HEK293 (cell line): ENCODE measurements at regions of chr6 and their contacts with region 1.

Region 1: GRCh38 chr6:148578245-148578732 is 168.5 kb upstream of the UST start:
- H3K4me3 ChIP-seq: no peak overlapping the region
- H3K27ac ChIP-seq: no peak overlapping the region
- H3K4me1 ChIP-seq: no peaks in the 10 kb centered on the region
- CTCF ChIP-seq: peak; percentile 99

Region 2: DNA sequence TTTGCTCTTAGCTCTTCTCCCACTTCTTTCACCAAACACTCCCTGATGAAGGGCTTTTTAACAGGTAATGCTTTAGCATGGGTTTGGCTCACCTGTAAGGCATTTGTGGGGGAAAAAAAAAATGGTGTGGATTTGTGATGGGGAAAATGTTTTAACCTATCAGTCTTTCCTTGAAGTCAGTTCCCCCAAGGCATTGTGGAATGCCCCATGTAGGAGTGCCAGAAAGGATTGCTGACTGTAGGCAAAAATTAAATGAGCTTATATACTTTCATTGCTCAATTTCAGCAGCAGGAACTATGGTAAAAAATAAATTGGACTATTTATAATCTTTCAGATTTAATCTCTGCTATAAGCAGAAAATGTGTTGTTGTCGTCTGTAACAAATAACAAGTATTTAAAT is 246.2 kb before region 1 on chr6:
- CTCF ChIA-PET with region 1: no interaction called
- POLR2A ChIA-PET with region 1: no interaction called
- H3K4me3 ChIP-seq: no peak overlapping the region
- H3K27ac ChIP-seq: no peak overlapping the region
- H3K4me1 ChIP-seq: no peaks in the 10 kb centered on the region
- CTCF ChIP-seq: no peak

Region 3: DNA sequence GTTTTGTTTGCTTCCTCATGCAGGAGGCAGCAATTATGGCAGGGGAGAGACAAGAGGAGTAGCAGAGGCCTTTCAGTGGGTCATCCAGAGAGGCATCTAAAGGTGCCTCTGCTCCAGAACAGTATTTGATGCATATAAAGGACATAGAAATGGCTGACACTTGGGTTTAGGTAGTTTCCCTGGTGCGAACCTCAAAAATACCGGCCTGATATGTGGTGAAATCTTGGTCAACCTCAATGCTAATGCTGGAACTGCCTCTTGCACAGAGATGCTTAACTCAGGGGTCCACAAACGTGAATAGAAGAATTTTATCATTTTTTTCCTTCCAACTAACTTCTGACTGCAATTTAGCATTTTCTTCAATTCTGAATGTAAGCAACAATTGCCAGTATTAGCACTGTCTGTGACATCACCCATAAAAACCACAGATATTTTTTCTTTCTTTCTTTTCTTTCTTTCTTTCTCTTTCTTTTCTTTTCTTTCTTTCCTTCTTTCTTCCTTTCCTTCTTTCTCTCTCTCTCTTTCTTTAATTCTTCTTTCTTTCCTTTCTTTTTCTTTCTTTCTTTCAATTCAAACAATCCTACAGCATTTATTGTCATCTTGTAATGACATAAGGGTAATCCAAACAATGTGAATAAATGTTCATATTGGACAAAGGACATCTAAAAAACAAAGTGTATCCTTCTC is 11.5 kb before region 1 on chr6:
- CTCF ChIA-PET with region 1: interaction called, 41 read pairs
- POLR2A ChIA-PET with region 1: no interaction called
- H3K4me3 ChIP-seq: no peak overlapping the region
- H3K27ac ChIP-seq: no peak overlapping the region
- H3K4me1 ChIP-seq: no peaks in the 10 kb centered on the region
- CTCF ChIP-seq: no peak

Region 4: GRCh38 chr6:148629181-148629580 is 50.9 kb after region 1 on chr6:
- CTCF ChIA-PET with region 1: interaction called, 10 read pairs
- POLR2A ChIA-PET with region 1: no interaction called
- H3K4me3 ChIP-seq: no peak overlapping the region
- H3K27ac ChIP-seq: no peak overlapping the region
- H3K4me1 ChIP-seq: peaks cover 4% of the 10 kb centered on the region
- CTCF ChIP-seq: no peak

Region 5: GRCh38 chr6:148957752-148958151 is 379.5 kb after region 1 on chr6:
- CTCF ChIA-PET with region 1: interaction called, 19 read pairs
- POLR2A ChIA-PET with region 1: no interaction called
- H3K4me3 ChIP-seq: no peak overlapping the region
- H3K27ac ChIP-seq: no peak overlapping the region
- H3K4me1 ChIP-seq: no peaks in the 10 kb centered on the region; the same call in 1 of the 2 replicates
- CTCF ChIP-seq: no peak

Region 6: DNA sequence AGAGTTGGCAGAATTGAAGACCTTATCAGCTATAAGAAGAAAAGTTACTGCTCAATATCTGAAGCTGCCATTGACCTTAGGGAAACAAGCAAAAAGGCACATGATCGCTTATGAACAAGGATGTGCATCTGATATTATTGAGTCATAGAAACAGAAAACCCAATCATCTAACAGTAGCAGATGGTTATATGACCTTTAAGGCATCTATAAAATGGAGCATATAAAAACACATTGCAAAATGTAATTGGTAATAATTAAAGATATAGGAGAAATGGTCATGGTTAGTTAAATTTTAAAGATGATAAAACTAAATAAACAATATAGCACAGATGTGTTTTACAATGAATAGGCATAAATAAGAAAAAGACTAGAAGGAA is 479.2 kb after region 1 on chr6:
- CTCF ChIA-PET with region 1: interaction called, 10 read pairs
- POLR2A ChIA-PET with region 1: no interaction called
- H3K4me3 ChIP-seq: no peak overlapping the region
- H3K27ac ChIP-seq: no peak overlapping the region
- H3K4me1 ChIP-seq: peaks cover 37% of the 10 kb centered on the region
- CTCF ChIP-seq: no peak

Region 7: GRCh38 chr6:149513915-149514314 is 935.6 kb after region 1 on chr6:
- CTCF ChIA-PET with region 1: interaction called, 10 read pairs
- POLR2A ChIA-PET with region 1: no interaction called
- H3K4me3 ChIP-seq: no peak overlapping the region
- H3K27ac ChIP-seq: no peak overlapping the region
- H3K4me1 ChIP-seq: no peaks in the 10 kb centered on the region
- CTCF ChIP-seq: no peak